Naive thymus-derived CD4-positive, alpha-beta T cell (primary cell): ENCODE measurements at regions of chr6 and their contacts with region 1.

Region 1: GRCh38 chr6:33075568-33076405 is at the start of gene HLA-DPB1:
- DNase-seq: peak in 7 of 9 donors; percentile 53 to 83 (median 67)
- ATAC-seq: peak; percentile 94
- H3K4me3 ChIP-seq: peak within 1 kb of the TSS; percentile 74
- H3K4me3 Mint-ChIP-seq: peak within 1 kb of the TSS; percentile 60 to 91 (median 84)
- H3K27ac ChIP-seq: peak within 1 kb of the TSS; percentile 76
- H3K27ac Mint-ChIP-seq: peak within 1 kb of the TSS; percentile 32 to 93 (median 76)
- H3K4me1 ChIP-seq: peaks cover 5 to 44% of the 10 kb centered on the region in 2 donors
- H3K4me1 Mint-ChIP-seq: peaks cover 34 to 71% (median 54%) of the 10 kb centered on the region in 7 donors
- H3K27me3 ChIP-seq: no peaks in the 10 kb centered on the region
- H3K27me3 Mint-ChIP-seq: peaks cover 0 to 11% (median 2%) of the 10 kb centered on the region in 5 donors
- total RNA-seq, gene HLA-DPB1: 13.7 to 308 (median 43.3) TPM

Region 2: DNA sequence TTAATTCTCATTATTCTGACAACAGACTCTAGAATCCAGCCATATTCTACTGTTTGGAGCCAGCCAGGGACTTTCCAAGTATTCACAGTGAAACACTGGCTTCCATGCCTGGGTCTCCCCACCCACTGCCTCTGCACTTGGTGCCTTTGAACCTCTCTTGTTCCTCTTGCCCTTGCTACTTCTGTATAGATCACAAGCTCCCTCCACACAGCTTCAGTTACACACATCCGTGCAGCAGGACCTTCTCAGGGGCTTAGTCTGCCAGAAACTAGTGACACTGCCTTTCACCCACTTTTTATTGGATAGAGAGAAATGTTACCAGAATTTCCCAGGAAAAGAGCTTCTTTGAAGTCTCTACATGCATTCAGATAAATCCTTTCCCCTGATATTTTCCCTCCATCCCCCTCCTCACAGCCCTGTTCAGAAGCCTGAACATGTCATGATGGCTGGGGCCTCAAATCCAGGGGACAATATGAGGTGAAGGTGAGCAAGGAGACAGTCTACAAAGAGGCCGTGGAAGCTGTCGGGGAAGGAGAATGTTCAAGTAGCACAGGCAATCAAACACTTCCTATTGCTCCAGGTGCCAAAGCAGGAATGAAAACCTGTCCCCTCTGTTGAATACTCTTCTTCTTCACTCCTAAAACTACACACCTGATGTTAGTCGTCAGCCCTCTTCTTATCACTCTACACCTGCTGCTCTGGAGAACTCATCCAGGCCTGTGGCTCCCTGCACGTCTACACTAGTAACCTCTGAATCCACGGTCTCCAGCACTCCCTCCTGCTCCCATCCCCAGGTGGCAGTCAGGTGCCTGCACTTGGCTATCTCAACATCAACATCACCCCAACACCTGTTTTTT is 46.2 kb before region 1 on chr6:
- CTCF ChIA-PET with region 1: no interaction called
- POLR2A ChIA-PET with region 1: interaction called, 3 read pairs
- intact Hi-C with region 1: loop called in 1 of 2 experiments (anchors 2 kb)
- DNase-seq: no peak
- ATAC-seq: peak; percentile 88
- H3K4me3 ChIP-seq: no peak overlapping the region
- H3K4me3 Mint-ChIP-seq: peak overlapping the region in 1 of 10 donors; percentile 20
- H3K27ac ChIP-seq: no peak overlapping the region
- H3K27ac Mint-ChIP-seq: peak overlapping the region in 1 of 9 donors; percentile 85
- H3K4me1 ChIP-seq: peaks cover 0 to 4% of the 10 kb centered on the region in 2 donors
- H3K4me1 Mint-ChIP-seq: peaks cover 0 to 25% (median 0%) of the 10 kb centered on the region in 7 donors
- H3K27me3 ChIP-seq: no peaks in the 10 kb centered on the region
- H3K27me3 Mint-ChIP-seq: peaks cover 3 to 51% (median 4%) of the 10 kb centered on the region in 5 donors

Region 3: DNA sequence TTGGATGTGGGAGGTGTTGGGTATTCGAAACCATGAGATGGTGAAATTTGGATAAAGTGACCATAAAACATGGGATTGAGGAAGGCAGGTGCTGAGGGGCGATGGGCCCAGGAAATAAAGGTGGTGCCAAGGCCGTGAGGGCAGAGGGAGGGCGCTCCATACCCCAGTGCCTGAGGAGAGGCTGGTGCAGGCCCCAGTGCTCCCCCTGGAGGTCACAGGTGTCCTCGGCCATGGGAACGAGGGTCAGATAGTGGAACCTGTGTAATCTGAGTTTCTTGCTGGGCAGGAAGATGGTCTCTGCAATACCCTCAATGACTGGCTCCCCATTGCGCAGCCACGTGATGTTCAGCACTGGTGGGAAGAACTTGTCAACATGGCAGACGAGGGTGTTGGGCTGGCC is 16.2 kb after region 1 on chr6:
- CTCF ChIA-PET with region 1: no interaction called
- POLR2A ChIA-PET with region 1: no interaction called
- intact Hi-C with region 1: no loop called
- DNase-seq: peak in 8 of 9 donors; percentile 13 to 55 (median 41)
- ATAC-seq: peak; percentile 91
- H3K4me3 ChIP-seq: no peak overlapping the region
- H3K4me3 Mint-ChIP-seq: no peak overlapping the region
- H3K27ac ChIP-seq: no peak overlapping the region
- H3K27ac Mint-ChIP-seq: no peak overlapping the region
- H3K4me1 ChIP-seq: no peaks in the 10 kb centered on the region
- H3K4me1 Mint-ChIP-seq: peaks cover 0 to 5% (median 0%) of the 10 kb centered on the region in 7 donors
- H3K27me3 ChIP-seq: no peaks in the 10 kb centered on the region
- H3K27me3 Mint-ChIP-seq: peaks cover 12 to 32% (median 18%) of the 10 kb centered on the region in 5 donors